Activated CD8-positive, alpha-beta T cell treated with anti-CD3 and anti-CD28 coated beads, Interleukin-2, amount 10 ng/mL, durations not matched to agents 7 days and 5 days (primary cell): ENCODE measurements at regions of chr5 and their contacts with region 1.

Region 1: GRCh38 chr5:172466062-172466461 is 11.7 kb upstream of the SH3PXD2B start:
- DNase-seq: no peak
- ATAC-seq: no peak
- H3K4me3 Mint-ChIP-seq: no peak overlapping the region
- H3K27ac Mint-ChIP-seq: no peak overlapping the region
- H3K4me1 Mint-ChIP-seq: peaks cover 8% of the 10 kb centered on the region
- H3K27me3 Mint-ChIP-seq: peaks cover 11% of the 10 kb centered on the region

Region 2: GRCh38 chr5:172450861-172451695 is 15.0 kb before region 1 on chr5:
- CTCF ChIA-PET with region 1: interaction called, 39 read pairs
- POLR2A ChIA-PET with region 1: interaction called, 3 read pairs
- DNase-seq: peak; percentile 59
- ATAC-seq: no peak
- H3K4me3 Mint-ChIP-seq: no peak overlapping the region
- H3K27ac Mint-ChIP-seq: no peak overlapping the region
- H3K4me1 Mint-ChIP-seq: peaks cover 8% of the 10 kb centered on the region
- H3K27me3 Mint-ChIP-seq: peaks cover 34% of the 10 kb centered on the region

Region 3: DNA sequence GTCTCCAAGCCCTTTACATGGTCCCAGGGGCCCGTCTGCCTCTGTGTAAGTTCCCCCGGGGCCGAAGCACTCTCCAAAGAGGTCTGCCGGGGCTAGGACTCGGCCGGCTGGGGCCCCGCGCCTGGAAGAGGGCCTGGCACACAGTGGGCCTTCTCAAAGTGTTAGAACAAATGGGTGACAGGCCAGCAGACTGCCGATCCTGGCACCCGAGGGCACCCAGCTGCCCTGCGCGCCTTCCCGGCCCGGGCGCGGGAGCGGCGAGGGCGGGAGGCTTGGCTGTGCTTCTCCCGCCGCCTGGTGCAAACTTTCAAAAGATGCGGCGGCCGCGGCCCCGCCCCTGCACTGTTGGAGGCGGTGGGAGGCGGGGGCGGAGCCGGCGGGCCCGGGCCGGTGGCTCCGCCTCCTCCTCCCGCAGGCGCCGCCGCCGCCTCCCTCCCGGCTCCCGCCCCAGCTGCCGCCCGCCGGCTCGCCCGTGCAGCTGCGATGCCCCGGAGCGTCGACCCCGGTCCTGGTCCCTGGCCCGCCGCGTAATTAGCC is 174.8 kb after region 1 on chr5 and contains the start of gene NEURL1B:
- CTCF ChIA-PET with region 1: no interaction called
- POLR2A ChIA-PET with region 1: no interaction called
- DNase-seq: peak; percentile 79
- ATAC-seq: peak; percentile 91
- H3K4me3 Mint-ChIP-seq: peak within 1 kb of the TSS; percentile 62
- H3K27ac Mint-ChIP-seq: peak within 1 kb of the TSS; percentile 66
- H3K4me1 Mint-ChIP-seq: peaks cover 8% of the 10 kb centered on the region
- H3K27me3 Mint-ChIP-seq: peaks cover 40% of the 10 kb centered on the region
- total RNA-seq, gene NEURL1B: 3.9 to 4.2 TPM